Activated CD4-positive, alpha-beta T cell treated with anti-CD3 and anti-CD28 coated beads for 36 hours (primary cell): ENCODE measurements at regions of chr22 and their contacts with region 1.

Region 1: GRCh38 chr22:28829358-28830181 is 29.2 kb upstream of the XBP1 start:
- DNase-seq: peak; percentile 84
- ATAC-seq: peak; percentile 74
- H3K4me3 Mint-ChIP-seq: no peak overlapping the region
- H3K27ac Mint-ChIP-seq: no peak overlapping the region
- H3K4me1 Mint-ChIP-seq: peaks cover 5% of the 10 kb centered on the region
- H3K27me3 Mint-ChIP-seq: peaks cover 2% of the 10 kb centered on the region

Region 2: DNA sequence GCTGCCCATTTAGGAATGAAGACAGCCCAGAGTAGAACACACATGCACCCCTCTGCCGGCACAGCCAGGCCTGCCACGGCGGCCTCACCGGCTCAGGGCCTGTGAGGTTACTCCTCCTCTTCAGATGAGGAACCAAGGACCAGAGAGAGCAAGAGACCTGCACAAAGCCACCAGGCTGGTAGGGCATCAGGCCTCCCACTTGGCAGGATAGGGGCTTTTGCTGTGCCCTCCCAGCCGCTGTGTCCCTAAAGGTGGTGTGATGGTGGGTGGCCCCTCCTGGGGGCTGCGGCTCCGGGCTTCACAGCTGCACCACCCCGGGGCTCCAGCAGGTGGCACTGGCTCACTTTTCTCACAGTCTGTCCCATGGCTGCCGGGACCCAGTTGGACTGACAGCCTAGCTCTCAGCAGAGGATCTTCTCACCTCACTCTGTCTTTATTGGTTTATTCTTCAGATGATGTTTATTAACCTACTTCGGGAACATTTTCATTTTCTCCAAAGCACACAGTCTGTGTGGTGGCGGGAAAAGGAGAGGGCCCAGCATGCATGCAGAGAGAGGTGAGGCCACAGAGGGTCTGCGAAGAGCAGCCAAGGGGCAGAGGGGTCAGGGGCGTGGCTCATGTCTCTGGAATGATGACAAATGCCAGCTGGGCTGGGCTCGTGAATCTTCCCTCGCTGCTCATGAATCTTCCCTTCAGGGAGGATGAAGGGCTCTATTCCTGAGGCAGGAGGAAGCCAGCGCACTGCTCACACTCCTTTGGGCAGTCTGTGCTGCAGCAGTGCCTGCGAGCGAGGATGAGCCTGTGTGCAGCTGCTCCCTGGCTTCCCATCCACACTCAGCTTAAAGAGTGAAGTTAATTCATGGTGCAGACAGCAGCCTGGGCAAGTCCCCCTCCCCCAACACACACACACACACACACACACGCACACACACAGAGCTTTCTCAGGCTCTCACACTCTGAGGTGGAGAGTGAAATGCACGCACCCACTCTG is 809.4 kb before region 1 on chr22:
- CTCF ChIA-PET with region 1: no interaction called
- POLR2A ChIA-PET with region 1: no interaction called
- intact Hi-C with region 1: loop called in 1 of 2 experiments (anchors 1 kb)
- DNase-seq: peak; percentile 81
- ATAC-seq: peak; percentile 87
- H3K4me3 Mint-ChIP-seq: no peak overlapping the region
- H3K27ac Mint-ChIP-seq: no peak overlapping the region
- H3K4me1 Mint-ChIP-seq: no peaks in the 10 kb centered on the region
- H3K27me3 Mint-ChIP-seq: no peaks in the 10 kb centered on the region

Region 3: GRCh38 chr22:28600546-28601143 is 228.9 kb before region 1 on chr22:
- CTCF ChIA-PET with region 1: interaction called, 60 read pairs
- POLR2A ChIA-PET with region 1: no interaction called
- intact Hi-C with region 1: loop called (anchors 1 kb)
- DNase-seq: peak; percentile 6
- ATAC-seq: no peak
- H3K4me3 Mint-ChIP-seq: no peak overlapping the region
- H3K27ac Mint-ChIP-seq: no peak overlapping the region
- H3K4me1 Mint-ChIP-seq: no peaks in the 10 kb centered on the region
- H3K27me3 Mint-ChIP-seq: peaks cover 5% of the 10 kb centered on the region

Region 4: GRCh38 chr22:28772633-28773460 is 56.7 kb before region 1 on chr22 and contains the start of gene CCDC117:
- CTCF ChIA-PET with region 1: interaction called, 7 read pairs
- POLR2A ChIA-PET with region 1: interaction called, 3 read pairs
- intact Hi-C with region 1: loop called in 1 of 2 experiments (anchors 1 kb)
- DNase-seq: peak; percentile 96
- ATAC-seq: peak; percentile 91
- H3K4me3 Mint-ChIP-seq: peak within 1 kb of the TSS; percentile 94
- H3K27ac Mint-ChIP-seq: peak within 1 kb of the TSS; percentile 99
- H3K4me1 Mint-ChIP-seq: peaks cover 19% of the 10 kb centered on the region
- H3K27me3 Mint-ChIP-seq: no peaks in the 10 kb centered on the region
- total RNA-seq, gene CCDC117: 36.1 to 36.8 TPM

Region 5: GRCh38 chr22:28810821-28811491 is 18.6 kb before region 1 on chr22:
- CTCF ChIA-PET with region 1: interaction called, 46 read pairs
- POLR2A ChIA-PET with region 1: no interaction called
- intact Hi-C with region 1: no loop called
- DNase-seq: peak; percentile 46
- ATAC-seq: peak; percentile 24
- H3K4me3 Mint-ChIP-seq: peak overlapping the region; percentile 53
- H3K27ac Mint-ChIP-seq: peak overlapping the region; percentile 42
- H3K4me1 Mint-ChIP-seq: peaks cover 53% of the 10 kb centered on the region
- H3K27me3 Mint-ChIP-seq: no peaks in the 10 kb centered on the region

Region 6: GRCh38 chr22:29040385-29041275 is 211.1 kb after region 1 on chr22:
- CTCF ChIA-PET with region 1: interaction called, 23 read pairs
- POLR2A ChIA-PET with region 1: no interaction called
- intact Hi-C with region 1: no loop called
- DNase-seq: peak; percentile 77
- ATAC-seq: peak; percentile 65
- H3K4me3 Mint-ChIP-seq: no peak overlapping the region
- H3K27ac Mint-ChIP-seq: no peak overlapping the region
- H3K4me1 Mint-ChIP-seq: no peaks in the 10 kb centered on the region
- H3K27me3 Mint-ChIP-seq: peaks cover 7% of the 10 kb centered on the region